ENCODE measurements at regions of chr7 and their contacts with region 1.

Region 1: GRCh38 chr7:74299401-74299800 is 10.2 kb downstream of the CLIP2 start:
- DNase-seq: no peak
- H3K4me3 ChIP-seq: no peak overlapping the region
- H3K4me1 ChIP-seq: peaks cover 13% of the 10 kb centered on the region
- H3K27me3 ChIP-seq: no peaks in the 10 kb centered on the region

Region 2: GRCh38 chr7:74262639-74263398 is 36.6 kb before region 1 on chr7:
- in situ Hi-C with region 1: loop called (anchors 5 kb)
- DNase-seq: no peak
- H3K4me3 ChIP-seq: no peak overlapping the region
- H3K4me1 ChIP-seq: no peaks in the 10 kb centered on the region
- H3K27me3 ChIP-seq: no peaks in the 10 kb centered on the region

Region 3: DNA sequence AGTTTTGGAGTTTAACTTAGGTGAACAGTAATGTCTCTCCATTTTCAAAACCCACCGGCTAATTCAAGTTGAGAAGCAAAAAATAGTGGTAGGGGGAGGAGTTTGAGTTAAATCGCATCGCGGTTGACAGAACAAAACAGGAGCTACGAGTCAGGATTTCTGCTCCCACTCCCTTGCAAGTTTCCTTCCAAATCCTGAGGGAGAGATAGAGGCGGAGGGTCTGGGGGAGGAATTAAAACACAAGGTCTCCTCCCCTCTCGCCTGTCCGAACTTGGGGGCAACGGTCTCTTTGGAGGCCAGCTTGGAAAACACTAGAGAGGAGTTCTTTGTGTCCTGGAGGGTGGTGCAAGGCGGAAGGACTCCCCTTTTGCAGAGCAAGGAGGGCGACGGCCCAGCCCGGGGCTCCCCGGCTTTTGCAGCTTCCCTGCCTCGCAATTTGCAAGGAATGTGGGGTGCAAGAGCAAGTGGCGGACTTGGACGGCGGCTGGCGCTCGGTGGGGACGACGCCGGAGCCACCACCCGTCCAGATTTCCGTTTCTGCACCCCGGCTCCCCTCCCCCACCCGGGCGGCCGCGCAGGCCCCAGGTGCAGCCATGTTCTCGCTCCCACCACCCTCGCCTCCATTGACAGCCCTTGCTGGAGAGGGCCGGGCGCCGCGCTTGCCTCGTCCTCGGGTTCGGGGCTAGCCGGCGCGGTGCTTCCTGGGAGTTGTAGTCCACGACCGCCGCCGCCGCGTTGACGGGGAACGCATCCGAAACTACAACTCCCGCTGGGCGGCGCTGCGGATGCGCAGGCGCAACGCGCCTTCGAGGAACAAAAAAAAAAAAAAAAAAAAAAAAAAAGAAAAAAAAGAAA is 357.7 kb after region 1 on chr7:
- in situ Hi-C with region 1: no loop called
- DNase-seq: peak; percentile 95 to 99
- H3K4me3 ChIP-seq: peak overlapping the region; percentile 54
- H3K4me1 ChIP-seq: peaks cover 34% of the 10 kb centered on the region
- H3K27me3 ChIP-seq: no peaks in the 10 kb centered on the region

Measured in HAP-1 (cell line).